ENCODE measurements at regions of chr11 and their contacts with region 1.

Region 1: DNA sequence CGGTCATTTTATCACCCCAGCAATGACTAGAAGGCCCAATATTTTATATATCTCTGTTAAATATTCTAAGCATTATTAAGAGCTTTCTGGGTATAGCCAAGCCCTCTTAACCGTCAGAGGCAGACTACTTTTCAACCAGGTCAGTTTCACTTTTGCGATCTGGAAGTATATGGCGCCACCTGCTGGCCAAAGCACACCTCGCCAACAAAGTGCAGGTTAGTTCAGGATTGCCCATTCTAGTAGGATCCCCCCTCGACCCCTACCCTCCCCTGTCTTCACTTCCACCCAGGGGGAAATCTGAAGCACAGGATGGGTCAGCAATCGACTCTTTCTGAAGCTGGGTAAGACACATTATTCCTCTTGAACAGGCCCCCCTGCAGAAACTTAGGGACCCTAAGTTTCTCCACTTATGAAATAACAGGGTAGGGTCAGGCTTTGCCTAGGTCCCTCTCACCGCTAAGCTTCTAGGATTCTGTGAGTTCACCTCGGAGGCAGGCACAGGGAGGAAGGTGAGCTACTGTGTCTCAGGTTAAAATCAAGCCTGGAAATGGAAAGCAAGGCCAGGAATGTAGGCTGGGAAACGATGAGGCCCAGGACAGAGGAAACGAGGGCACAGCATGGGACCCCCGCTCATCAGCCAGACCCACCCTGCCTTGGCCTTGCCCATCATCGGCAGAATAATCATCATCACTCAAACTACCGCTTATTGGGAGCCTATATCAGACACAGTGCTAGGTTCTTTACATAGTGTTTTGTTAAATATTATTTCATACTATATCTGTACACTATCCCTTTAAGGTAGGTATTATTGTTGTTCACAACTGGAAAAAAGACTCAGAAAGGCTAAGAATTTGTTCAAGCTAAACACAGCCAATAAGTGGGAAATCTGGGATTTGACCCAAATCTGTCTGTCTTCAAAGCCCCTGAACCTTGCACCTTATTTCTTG is 35.6 kb downstream of the KCNJ1 start:
- DNase-seq: peak; percentile 69
- H3K4me3 ChIP-seq: no peak overlapping the region
- H3K27ac ChIP-seq: no peak overlapping the region
- H3K4me1 ChIP-seq: no peaks in the 10 kb centered on the region
- H3K27me3 ChIP-seq: no peaks in the 10 kb centered on the region
- CTCF ChIP-seq: peak; percentile 71 to 97 (median 88)
- POLR2A ChIP-seq: no peak

Region 2: DNA sequence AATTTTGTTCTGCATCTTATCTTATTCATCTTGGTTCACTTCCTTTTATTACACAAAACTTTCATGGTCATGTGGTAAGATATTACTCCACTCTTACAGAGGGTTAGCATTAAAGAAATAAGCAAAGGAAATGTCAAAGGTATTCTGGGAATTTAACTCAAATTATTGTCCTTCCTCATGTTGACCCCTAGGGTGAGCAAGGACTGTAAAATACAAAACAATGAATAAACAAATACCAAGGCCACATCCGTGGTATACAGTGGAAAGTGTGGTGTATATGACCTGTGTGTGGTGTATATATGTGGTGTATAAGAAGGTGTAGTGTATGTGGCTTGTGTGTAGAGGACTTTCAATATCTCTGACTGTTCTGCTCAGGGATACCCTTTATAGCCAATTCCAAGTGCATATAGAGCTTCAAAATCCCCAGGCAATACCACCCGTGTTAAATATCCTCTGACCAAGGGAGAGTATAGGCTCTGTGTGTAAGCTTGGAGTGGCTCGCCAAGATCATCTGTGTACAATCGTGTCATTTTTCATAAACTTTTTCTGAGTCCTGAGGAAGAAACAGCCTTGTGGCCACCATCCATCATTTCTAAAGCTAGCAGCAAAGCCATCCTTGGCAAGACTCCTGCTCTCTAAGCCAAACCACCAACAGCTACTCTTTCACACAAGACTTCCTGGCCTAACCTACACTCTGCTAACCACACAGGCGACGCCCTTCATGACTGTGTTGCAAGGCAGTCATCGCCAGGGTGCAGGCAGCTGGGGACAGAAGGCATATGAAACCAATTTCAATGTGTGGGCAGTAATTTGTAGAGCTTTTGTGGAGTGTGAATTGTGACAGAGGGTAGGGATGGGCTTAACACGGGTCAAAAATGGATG is 792.1 kb before region 1 on chr11:
- intact Hi-C with region 1: loop called (anchors 5 kb)
- DNase-seq: peak; percentile 48
- H3K4me3 ChIP-seq: no peak overlapping the region
- H3K27ac ChIP-seq: no peak overlapping the region
- H3K4me1 ChIP-seq: no peaks in the 10 kb centered on the region
- H3K27me3 ChIP-seq: no peaks in the 10 kb centered on the region
- CTCF ChIP-seq: no peak
- POLR2A ChIP-seq: no peak

Region 3: GRCh38 chr11:128157423-128158298 is 673.8 kb before region 1 on chr11:
- intact Hi-C with region 1: loop called (anchors 5 kb)
- DNase-seq: peak; percentile 42
- H3K4me3 ChIP-seq: no peak overlapping the region
- H3K27ac ChIP-seq: no peak overlapping the region
- H3K4me1 ChIP-seq: no peaks in the 10 kb centered on the region
- H3K27me3 ChIP-seq: no peaks in the 10 kb centered on the region
- CTCF ChIP-seq: peak; percentile 44 to 84 (median 77)
- POLR2A ChIP-seq: no peak

Region 4: DNA sequence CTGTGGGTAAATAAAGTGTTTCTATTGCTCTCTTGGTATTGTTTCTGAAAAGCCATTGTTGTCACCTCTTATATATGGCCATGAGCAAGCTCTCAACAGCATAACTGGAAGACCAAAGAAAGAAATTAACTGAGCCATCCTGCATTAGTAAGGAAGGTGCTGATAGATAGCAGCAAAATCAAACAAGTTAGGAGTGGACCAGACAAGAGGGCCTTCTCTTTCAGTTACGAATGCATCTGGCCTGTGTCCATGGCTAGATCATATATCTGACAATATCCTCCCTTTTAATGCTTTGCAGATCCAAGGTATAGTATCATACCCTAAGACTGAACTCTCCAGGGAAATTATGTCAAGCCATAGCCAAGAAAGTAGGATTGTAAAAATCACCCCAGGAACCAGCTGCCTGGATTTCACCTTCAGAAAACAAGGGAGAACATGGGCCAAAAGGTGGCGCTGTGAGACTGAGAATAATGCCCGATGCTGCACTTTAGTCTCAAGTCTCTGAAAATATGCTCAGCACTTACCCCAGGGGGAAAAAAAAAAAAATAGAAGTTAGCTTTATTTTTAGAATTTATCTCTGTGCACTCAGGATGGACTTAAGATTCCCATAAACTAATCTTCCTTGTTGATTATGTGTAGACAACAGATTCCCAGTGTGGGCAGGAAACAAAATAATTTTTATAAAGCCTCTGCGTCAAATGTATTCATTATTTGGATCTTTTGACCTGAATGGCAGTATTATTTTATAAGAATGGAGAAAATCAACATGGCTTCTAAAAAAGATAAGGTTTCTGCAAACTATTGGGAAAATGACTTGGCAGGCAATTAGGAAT is 659.2 kb before region 1 on chr11:
- intact Hi-C with region 1: loop called (anchors 5 kb)
- DNase-seq: peak; percentile 73
- H3K4me3 ChIP-seq: no peak overlapping the region
- H3K27ac ChIP-seq: no peak overlapping the region
- H3K4me1 ChIP-seq: no peaks in the 10 kb centered on the region
- H3K27me3 ChIP-seq: no peaks in the 10 kb centered on the region
- CTCF ChIP-seq: peak in 3 of 4 experiments; percentile 61 to 72 (median 70)
- POLR2A ChIP-seq: no peak

Region 5: GRCh38 chr11:128290106-128290840 is 541.2 kb before region 1 on chr11:
- intact Hi-C with region 1: loop called (anchors 5 kb)
- DNase-seq: peak; percentile 64
- H3K4me3 ChIP-seq: no peak overlapping the region
- H3K27ac ChIP-seq: no peak overlapping the region
- H3K4me1 ChIP-seq: no peaks in the 10 kb centered on the region
- H3K27me3 ChIP-seq: no peaks in the 10 kb centered on the region
- CTCF ChIP-seq: peak; percentile 60 to 80 (median 77)
- POLR2A ChIP-seq: no peak

Region 6: DNA sequence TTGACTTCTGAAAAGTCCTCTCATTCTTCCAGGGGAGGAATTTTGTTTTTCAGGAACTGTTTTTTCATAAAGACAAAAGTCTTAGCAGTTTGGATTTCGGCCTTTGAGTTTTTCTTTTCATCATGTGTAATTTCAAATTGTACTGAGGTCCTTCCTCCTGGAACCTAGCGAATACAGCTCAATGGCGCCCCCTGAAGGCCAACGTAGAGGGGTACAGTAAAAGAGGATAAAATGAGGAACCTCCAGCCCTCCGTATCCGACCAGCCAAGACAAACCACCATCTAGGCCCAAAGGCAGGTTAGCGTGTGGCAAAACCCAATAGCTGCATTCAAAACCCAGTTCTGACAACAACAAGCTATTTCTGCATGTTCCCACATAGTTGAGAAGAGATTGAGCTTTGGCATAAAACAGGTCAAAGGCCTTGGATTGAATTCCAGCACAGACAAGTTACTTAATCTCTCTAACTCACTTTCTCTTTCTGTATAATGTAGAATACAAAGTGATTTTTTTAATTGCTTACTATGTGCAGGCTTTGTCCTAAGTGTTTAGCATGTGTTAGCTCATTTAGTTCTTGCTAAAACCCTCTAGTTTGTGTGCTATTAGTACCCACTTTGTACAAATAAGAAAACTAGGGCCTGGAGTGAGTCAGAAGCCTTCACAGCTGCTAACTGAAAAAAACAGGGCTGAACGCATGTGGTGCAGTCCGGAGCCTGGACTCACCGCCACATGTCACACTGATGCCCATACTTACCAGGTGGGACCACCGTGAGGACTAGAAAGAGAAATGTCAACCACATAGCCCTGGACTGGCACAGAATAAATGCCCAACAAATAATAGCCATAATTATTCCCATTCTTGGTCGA is 200.8 kb before region 1 on chr11:
- intact Hi-C with region 1: loop called (anchors 2 kb)
- DNase-seq: peak; percentile 69
- H3K4me3 ChIP-seq: no peak overlapping the region
- H3K27ac ChIP-seq: no peak overlapping the region
- H3K4me1 ChIP-seq: no peaks in the 10 kb centered on the region
- H3K27me3 ChIP-seq: no peaks in the 10 kb centered on the region
- CTCF ChIP-seq: peak; percentile 80 to 93 (median 89)
- POLR2A ChIP-seq: no peak

Region 7: DNA sequence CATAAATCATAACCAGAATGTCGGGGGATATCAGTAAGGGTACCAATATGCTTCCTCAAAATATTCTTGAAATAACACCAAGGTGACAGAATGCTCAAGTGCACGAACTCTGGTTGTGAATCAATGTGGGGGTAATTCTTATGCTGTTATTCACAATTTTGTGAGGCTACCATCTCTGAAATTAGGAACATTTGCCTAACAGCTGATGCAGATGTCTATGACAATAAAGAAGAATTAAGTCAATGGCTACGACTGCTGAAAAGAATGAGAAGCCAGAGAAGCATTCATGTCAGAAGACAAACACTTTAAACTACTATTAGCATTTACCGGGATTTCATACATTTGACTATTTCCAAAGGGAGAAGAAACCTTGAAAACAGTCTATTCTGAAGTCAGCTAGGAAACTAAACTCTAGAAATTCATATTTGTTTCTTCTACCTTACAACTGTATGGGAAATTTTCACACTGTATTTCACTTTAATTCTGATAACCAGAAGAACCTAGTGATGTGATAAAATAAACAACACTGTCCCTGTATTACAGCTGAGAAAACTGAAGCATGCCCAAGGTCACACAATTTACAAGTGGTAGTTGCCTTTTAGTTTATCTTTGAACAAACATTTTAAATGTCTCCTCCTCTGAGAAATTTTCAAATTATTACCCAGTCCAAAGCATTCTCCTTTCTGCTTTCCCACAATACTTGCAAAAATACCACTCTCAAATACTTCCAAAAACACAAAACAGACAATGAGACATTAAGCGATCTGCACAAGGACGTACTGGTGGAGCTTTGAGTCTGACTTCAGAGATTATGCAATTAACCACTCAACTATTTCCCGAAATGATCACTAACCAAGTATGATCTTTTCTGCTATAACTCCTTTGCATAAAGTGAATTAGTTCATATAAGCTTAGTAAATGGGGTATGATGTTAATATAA is 378.7 kb after region 1 on chr11:
- intact Hi-C with region 1: no loop called
- DNase-seq: no peak
- H3K4me3 ChIP-seq: no peak overlapping the region
- H3K27ac ChIP-seq: no peak overlapping the region
- H3K4me1 ChIP-seq: no peaks in the 10 kb centered on the region
- H3K27me3 ChIP-seq: no peaks in the 10 kb centered on the region
- CTCF ChIP-seq: no peak
- POLR2A ChIP-seq: no peak

Measured in prostate gland (tissue), 2 donors.